Left colon (tissue), 2 donors: ENCODE measurements at regions of chr19 and their contacts with region 1.

Region 1: DNA sequence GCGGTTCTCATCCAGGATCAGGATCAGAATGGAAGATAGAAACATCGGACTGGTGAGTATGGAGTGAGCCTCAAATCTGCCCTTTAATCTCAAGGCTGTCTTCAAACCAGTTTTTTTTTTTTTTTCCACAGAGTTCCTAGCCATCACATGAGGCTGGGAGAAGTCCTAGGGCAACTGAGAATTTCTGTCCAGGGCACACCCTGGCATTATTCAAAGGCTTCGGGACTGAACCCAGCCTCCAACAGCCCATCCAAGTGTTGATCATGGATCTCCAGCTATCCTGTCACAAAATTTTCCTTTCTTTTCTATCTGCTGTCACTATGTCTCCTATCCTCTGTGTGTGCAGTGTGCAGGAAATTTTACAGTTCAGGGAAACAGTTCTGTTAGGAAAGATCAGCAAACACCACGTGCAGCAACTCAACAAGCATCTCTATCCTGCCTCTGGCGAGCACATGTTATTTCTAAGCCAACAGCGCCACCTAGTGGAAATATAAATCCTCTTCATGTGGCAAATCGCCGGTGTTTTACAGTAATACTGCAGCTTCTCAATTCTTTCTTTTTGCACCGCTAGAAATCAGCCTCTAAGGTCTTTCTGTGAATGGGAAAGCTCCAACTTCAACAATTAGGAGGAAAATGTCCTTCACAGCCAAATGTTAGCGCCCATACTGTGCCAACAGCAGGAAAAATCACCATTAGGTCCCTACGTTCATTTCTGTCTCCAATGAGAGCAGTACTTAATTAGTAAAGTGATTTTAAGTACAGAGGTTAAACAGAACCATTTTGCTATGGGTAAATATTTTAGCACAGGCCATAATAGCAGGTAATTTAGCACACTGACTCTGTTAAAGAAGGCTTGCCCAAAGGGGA is 21.4 kb upstream of the ZNF181 start:
- DNase-seq: peak in 1 of 2 donors; percentile 25
- ATAC-seq: peak; percentile 69

Region 2: DNA sequence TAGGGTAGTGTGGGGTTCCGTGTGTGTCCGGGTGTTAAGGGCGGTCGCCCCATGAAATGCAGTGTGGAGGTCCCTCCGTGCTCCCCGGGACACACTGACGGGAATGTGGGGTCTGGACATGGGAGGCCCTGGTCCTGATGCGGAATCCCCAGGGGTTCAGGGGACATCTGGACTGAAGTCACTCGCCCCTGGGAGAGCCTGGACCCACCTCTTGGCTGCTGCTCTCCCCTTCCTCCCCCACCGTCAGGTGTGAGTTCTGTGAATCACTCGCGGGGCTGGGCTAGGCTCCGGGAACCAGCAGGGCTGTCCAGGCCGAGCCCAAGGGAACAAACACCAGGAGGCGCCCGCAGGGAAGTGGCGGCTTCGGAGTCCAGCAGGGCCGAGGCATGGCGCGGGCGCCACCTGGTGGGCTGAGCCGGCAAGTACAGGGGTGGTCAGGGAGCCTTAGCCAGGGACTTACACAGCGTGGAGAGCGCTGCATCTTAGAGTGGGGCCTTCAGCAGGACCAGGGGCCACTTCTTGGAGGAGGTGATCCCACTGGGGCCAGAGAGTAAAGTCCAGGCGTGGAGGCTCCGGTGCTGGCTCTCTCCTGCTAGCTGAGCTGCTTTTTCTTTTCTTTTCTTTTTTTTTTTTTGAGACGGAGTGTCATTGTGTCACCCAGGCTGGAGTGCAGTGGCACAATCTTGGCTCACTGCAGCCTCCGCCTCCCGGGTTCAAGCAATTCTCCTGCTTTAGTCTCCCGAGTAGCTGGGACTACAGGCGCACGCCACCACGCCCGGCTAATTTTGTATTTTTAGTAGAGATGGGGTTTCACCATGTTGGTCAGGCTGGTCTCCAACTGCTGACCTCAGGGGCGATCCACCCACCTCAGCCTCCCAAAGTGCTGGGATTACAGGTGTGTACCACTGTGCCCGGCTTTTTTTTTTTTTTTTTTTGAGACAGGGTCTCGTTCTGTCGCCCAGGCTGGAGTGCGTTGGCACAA is 211.0 kb before region 1 on chr19:
- intact Hi-C with region 1: loop called in 1 of 2 experiments (anchors 5 kb)
- DNase-seq: peak; percentile 83 to 92
- ATAC-seq: peak; percentile 98

Region 3: DNA sequence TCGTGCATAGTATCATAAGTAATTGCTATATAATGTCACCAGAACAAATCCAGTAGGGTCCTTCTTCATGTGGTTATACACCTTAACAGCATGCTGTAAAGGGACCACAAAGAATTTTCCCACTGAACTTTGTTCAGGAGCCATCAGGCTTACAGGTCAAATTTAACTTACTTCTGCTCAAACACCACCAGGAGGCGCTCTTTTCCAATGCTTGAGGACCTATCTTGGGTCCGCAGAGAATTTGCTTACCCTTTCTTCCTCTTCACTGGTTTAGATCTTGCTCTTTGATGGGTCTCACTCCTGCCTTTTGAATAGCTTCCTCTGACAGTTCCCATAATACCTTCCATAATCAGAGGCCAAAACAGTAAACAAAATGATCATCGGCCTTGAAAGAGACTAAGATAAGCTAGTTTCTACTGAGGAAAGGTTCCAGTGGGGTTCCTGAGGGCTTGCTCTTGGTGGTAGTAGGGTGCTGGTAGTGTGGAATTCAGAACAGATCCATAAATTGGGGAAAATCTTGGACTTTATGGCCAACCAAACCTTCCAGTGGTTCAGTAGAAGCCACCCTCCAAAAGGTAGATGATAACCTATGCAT is 73.0 kb before region 1 on chr19:
- intact Hi-C with region 1: loop called in 1 of 2 experiments (anchors 2 kb)
- DNase-seq: peak in 1 of 2 donors; percentile 34
- ATAC-seq: peak; percentile 66

Region 4: DNA sequence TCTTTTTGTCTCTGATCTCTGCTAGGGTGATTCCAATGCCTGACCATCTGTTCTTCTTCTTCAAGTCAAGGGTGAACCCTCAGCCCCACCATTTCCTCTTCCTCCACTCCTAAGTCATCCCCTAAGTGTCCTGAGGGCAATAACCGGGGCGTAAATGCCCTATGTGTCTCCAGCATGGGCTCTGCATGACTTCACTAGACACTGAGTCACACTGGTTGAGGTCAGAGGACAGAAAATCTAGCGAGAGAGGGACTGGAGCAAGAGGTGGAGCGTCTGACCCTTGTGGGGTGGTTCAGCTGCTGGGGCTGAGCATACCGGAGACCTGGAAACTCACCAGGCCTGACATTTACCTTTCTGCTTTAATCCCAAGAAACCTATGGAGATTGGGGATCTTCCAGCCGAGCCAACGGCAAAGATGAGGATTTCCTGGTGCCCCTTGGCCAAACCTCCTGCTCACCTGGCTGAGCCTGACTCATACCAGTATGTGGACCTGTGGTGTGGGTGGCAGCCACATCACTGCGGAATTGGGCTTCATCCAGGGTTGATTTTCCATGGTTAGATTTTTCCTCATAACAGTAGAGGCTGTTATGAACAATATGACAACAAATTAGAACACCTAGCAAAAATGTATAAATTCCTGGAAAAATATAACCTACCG is 62.6 kb before region 1 on chr19:
- intact Hi-C with region 1: no loop called
- DNase-seq: no peak
- ATAC-seq: no peak